ENCODE measurements at regions of chr21 and their contacts with region 1.

Region 1: DNA sequence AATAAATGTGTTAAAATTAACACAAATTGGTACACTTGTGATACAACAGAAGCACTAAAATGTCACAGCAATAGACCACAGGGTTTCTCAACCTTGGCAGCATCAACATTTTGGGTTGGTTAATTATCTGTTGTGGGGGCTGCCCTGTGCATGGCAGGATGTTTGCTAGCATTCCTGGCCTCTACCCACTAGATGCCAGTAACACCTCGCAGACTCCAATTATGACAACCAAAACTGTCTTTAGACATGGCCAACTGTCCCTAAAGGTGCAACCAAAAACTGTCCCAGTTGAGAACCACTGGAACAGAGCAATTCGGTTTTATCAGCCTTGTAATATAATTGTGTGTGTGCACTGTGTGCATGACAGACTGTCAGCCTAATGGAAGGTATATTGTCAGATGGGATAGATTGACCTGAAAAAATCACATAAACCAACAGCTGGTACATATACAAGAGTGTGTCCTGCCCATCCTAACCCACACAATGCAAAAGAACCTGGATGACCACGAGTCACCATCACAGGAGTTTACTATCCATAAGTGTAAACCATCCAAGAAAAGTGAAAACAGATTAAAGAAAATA is 13.5 kb upstream of the ERG start:
- DNase-seq: no peak
- ATAC-seq: no peak

Region 2: GRCh38 chr21:37866027-37866426 is 645.7 kb before region 1 on chr21:
- intact Hi-C with region 1: no loop called
- DNase-seq: no peak
- ATAC-seq: peak; percentile 67

Region 3: DNA sequence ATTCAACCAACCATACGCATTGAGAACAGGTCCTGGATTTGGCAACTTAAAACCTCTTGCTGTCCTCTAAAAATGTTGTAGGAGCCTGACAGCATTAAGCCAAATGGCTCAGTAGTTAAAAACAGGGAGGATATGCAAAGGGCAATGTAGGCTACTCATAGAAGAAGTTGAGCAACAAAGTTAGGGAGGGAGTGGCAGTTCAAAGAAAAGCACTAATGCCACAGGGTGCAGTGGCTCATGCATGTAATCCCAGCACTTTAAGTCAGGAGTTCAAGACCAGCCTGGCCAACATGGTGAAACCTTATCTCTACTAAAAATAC is 79.4 kb after region 1 on chr21:
- intact Hi-C with region 1: no loop called
- DNase-seq: no peak
- ATAC-seq: no peak

Region 4: GRCh38 chr21:38702196-38702595 is 190.4 kb after region 1 on chr21:
- intact Hi-C with region 1: loop called (anchors 10 kb)
- DNase-seq: peak; percentile 52
- ATAC-seq: peak; percentile 73